Activated CD4-positive, alpha-beta memory T cell treated with anti-CD3 and anti-CD28 coated beads for 36 hours (primary cell): ENCODE measurements at regions of chr16 and their contacts with region 1.

Region 1: GRCh38 chr16:69286941-69287713 is 24.0 kb upstream of the VPS4A start:
- DNase-seq: no peak
- H3K4me3 Mint-ChIP-seq: no peak overlapping the region
- H3K27ac Mint-ChIP-seq: peak overlapping the region; percentile 29
- H3K4me1 Mint-ChIP-seq: peaks cover 3% of the 10 kb centered on the region
- H3K27me3 Mint-ChIP-seq: no peaks in the 10 kb centered on the region

Region 2: GRCh38 chr16:69112285-69113129 is 174.6 kb before region 1 on chr16:
- CTCF ChIA-PET with region 1: interaction called, 11 read pairs
- POLR2A ChIA-PET with region 1: no interaction called
- intact Hi-C with region 1: no loop called
- DNase-seq: peak; percentile 69
- H3K4me3 Mint-ChIP-seq: no peak overlapping the region
- H3K27ac Mint-ChIP-seq: no peak overlapping the region
- H3K4me1 Mint-ChIP-seq: peaks cover 3% of the 10 kb centered on the region
- H3K27me3 Mint-ChIP-seq: peaks cover 13% of the 10 kb centered on the region

Region 3: DNA sequence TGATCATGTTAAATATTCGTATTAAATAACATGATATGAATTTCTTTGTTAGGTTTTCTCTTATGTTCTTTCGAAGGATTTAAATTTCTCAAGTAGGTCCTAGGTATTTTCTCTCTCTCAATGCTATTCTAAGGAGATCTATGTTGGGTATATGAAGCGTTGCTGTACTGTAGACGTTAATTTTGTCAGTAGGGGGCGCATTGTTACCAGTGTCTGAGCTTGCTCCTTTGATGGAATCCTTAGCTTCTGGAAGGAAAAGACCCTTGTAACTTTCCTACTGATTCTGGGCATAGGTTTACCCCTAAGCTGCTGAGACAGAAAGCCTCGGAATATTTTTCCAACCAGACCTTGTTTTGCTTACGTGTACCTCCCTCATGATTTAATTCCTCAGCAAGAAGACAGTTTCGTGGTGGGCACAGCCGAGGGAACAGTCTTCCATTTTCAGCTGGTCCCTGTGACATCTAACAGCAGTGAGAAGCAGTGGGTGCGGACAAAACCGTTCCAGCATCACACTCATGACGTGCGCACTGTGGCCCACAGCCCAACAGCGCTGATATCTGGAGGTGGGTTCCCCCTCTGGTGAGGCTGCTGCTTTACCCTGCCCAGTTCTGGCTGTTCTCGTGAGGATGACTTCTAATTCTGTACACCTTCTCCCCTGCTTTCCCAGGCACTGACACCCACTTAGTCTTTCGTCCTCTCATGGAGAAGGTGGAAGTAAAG is 136.8 kb before region 1 on chr16:
- CTCF ChIA-PET with region 1: interaction called, 43 read pairs
- POLR2A ChIA-PET with region 1: no interaction called
- intact Hi-C with region 1: loop called (anchors 1 kb)
- DNase-seq: peak; percentile 48
- H3K4me3 Mint-ChIP-seq: no peak overlapping the region
- H3K27ac Mint-ChIP-seq: no peak overlapping the region
- H3K4me1 Mint-ChIP-seq: no peaks in the 10 kb centered on the region
- H3K27me3 Mint-ChIP-seq: no peaks in the 10 kb centered on the region

Region 4: GRCh38 chr16:69157196-69157595 is 129.9 kb before region 1 on chr16:
- CTCF ChIA-PET with region 1: interaction called, 43 read pairs
- POLR2A ChIA-PET with region 1: no interaction called
- intact Hi-C with region 1: no loop called
- DNase-seq: no peak
- H3K4me3 Mint-ChIP-seq: no peak overlapping the region
- H3K27ac Mint-ChIP-seq: peak overlapping the region; percentile 9
- H3K4me1 Mint-ChIP-seq: peaks cover 15% of the 10 kb centered on the region
- H3K27me3 Mint-ChIP-seq: no peaks in the 10 kb centered on the region

Region 5: GRCh38 chr16:69542974-69543373 is 255.8 kb after region 1 on chr16:
- CTCF ChIA-PET with region 1: no interaction called
- POLR2A ChIA-PET with region 1: no interaction called
- intact Hi-C with region 1: no loop called
- DNase-seq: no peak
- H3K4me3 Mint-ChIP-seq: no peak overlapping the region
- H3K27ac Mint-ChIP-seq: no peak overlapping the region
- H3K4me1 Mint-ChIP-seq: no peaks in the 10 kb centered on the region
- H3K27me3 Mint-ChIP-seq: no peaks in the 10 kb centered on the region